ENCODE measurements at regions of chr6 and their contacts with region 1.

Region 1: GRCh38 chr6:56292505-56293181 is 45.3 kb upstream of the COL21A1 start:
- DNase-seq: no peak
- ATAC-seq: peak; percentile 83
- H3K4me3 ChIP-seq: no peak overlapping the region
- H3K27ac ChIP-seq: no peak overlapping the region
- H3K4me1 ChIP-seq: no peaks in the 10 kb centered on the region
- H3K27me3 ChIP-seq: no peaks in the 10 kb centered on the region
- CTCF ChIP-seq: peak; percentile 66

Region 2: DNA sequence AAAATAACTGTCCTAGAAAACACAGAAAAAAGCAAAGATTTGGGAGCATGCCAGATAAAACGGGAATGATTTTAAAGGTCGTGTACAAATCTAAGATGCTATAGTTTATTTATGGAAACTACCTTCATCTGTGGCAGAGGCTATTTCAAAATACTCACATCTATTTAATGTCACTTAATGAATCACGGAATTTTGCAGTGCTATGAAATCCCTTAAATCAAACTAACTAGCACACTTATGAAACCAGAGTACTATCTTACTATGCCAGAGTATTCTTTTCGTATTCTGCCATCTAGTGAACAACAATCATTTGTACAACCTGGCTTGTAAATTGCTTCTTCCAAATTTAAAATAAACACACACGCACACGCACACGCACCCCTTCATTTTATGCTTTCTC is 339.3 kb before region 1 on chr6:
- intact Hi-C with region 1: no loop called
- DNase-seq: no peak
- ATAC-seq: no peak
- H3K4me3 ChIP-seq: peak overlapping the region; percentile 27
- H3K27ac ChIP-seq: no peak overlapping the region
- H3K4me1 ChIP-seq: no peaks in the 10 kb centered on the region
- H3K27me3 ChIP-seq: no peaks in the 10 kb centered on the region
- CTCF ChIP-seq: no peak

Region 3: GRCh38 chr6:55980627-55981211 is 311.9 kb before region 1 on chr6:
- intact Hi-C with region 1: loop called (anchors 5 kb)
- DNase-seq: no peak
- ATAC-seq: no peak
- H3K4me3 ChIP-seq: no peak overlapping the region
- H3K27ac ChIP-seq: no peak overlapping the region
- H3K4me1 ChIP-seq: no peaks in the 10 kb centered on the region
- H3K27me3 ChIP-seq: no peaks in the 10 kb centered on the region
- CTCF ChIP-seq: peak; percentile 77

Region 4: GRCh38 chr6:56437171-56437900 is 144.7 kb after region 1 on chr6:
- intact Hi-C with region 1: no loop called
- DNase-seq: no peak
- ATAC-seq: no peak
- H3K4me3 ChIP-seq: no peak overlapping the region
- H3K27ac ChIP-seq: no peak overlapping the region
- H3K4me1 ChIP-seq: no peaks in the 10 kb centered on the region
- H3K27me3 ChIP-seq: no peaks in the 10 kb centered on the region
- CTCF ChIP-seq: no peak

Region 5: DNA sequence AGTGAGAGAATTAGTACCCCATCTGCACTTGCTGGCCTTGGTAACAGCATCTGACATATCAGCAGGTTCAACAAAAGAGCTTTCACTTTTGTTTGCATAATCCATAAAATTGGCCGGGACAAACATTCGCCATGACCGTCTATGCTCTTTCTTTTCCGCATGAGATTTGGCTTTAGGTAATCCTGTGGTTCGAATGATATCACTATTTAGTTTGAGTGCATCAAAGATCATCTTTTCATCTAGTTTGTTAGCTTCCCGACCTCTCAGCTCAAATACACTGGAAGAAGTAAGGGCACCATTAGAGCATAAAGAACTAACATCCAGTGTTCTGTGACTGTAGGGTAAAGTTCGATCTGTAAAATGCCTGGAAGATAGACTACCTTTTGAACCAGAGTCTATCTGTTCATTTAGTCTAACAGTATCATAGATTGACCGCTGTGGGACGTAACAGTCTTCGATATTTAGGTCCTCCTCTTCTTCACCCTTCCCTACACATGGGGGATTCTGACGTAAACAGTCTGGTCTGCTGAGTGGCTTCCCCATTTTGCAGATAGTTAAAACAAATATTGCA is 248.5 kb after region 1 on chr6:
- intact Hi-C with region 1: no loop called
- DNase-seq: no peak
- ATAC-seq: no peak
- H3K4me3 ChIP-seq: peak overlapping the region; percentile 60
- H3K27ac ChIP-seq: peak overlapping the region; percentile 90
- H3K4me1 ChIP-seq: peaks cover 12% of the 10 kb centered on the region
- H3K27me3 ChIP-seq: no peaks in the 10 kb centered on the region
- CTCF ChIP-seq: no peak

Measured in upper lobe of right lung (tissue), 1 donor.